ENCODE measurements at regions of chr16 and their contacts with region 1.

Region 1: GRCh38 chr16:30657866-30658730 is at the start of gene FBRS:
- DNase-seq: peak; percentile 100
- H3K4me3 ChIP-seq: peak within 1 kb of the TSS; percentile 70 to 93
- H3K4me3 Mint-ChIP-seq: peak within 1 kb of the TSS; percentile 92 to 99 (median 96)
- H3K27ac ChIP-seq: peak within 1 kb of the TSS; percentile 99
- H3K27ac Mint-ChIP-seq: peak within 1 kb of the TSS; percentile 98 to 100 (median 100)
- H3K4me1 ChIP-seq: peaks cover 43% of the 10 kb centered on the region
- H3K4me1 Mint-ChIP-seq: peaks cover 25 to 52% (median 39%) of the 10 kb centered on the region in 4 donors
- H3K27me3 ChIP-seq: no peaks in the 10 kb centered on the region
- H3K27me3 Mint-ChIP-seq: no peaks in the 10 kb centered on the region
- total RNA-seq, gene FBRS: 164 to 172 TPM

Region 2: GRCh38 chr16:30417529-30418349 is 240.4 kb before region 1 on chr16:
- CTCF ChIA-PET with region 1: no interaction called
- POLR2A ChIA-PET with region 1: interaction called, 11 read pairs
- intact Hi-C with region 1: no loop called
- DNase-seq: peak; percentile 89 to 93 (median 91)
- H3K4me3 ChIP-seq: peak overlapping the region; percentile 12 to 68
- H3K4me3 Mint-ChIP-seq: peak overlapping the region; percentile 39 to 85 (median 68)
- H3K27ac ChIP-seq: peak overlapping the region; percentile 61
- H3K27ac Mint-ChIP-seq: peak overlapping the region in 3 of 7 donors; percentile 41 to 90 (median 74)
- H3K4me1 ChIP-seq: peaks cover 15% of the 10 kb centered on the region
- H3K4me1 Mint-ChIP-seq: peaks cover 6 to 24% (median 13%) of the 10 kb centered on the region in 4 donors
- H3K27me3 ChIP-seq: no peaks in the 10 kb centered on the region
- H3K27me3 Mint-ChIP-seq: no peaks in the 10 kb centered on the region

Region 3: DNA sequence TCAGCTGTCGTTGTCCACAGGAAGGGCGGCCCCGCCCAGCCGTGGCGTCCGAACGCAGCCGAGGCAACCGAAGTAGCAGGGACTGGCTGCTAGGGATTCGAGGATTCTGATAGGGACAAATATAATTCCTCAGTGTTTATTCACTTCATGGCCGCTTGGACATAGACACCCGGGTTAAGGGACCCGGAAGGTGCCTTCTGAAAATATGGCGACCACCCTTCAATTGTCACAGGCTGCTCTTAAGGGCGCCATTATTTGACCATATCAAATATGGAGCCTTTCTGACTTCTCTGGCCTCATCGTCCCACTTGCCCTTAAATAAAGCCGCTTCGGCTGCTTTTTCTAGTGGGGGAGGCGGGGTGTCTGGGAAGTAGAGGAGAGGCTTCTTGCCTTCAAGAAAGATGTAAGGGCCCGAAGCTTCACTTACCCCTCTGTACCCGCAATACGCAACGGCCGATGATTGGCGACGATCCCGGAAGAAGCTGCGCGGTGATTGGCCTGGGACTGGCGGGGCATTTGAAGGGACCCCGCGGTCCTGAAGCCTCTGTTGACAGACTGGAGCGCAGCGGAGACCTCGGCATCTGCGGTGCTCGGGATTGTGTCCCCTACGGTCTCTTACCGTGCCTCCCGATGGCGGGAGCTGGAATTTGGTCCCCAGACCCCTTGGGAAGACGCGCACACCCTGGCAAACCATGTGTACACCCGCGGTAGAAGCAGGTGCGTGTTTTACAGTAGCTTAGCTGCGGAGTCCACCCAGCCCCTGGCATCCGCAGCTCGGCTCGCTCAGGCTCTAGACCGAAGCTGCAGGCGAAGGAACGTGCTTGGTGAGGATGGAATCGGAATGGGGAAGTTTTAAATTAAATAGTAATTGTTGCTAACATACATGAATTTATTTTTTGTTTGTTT is 86.2 kb before region 1 on chr16 and contains the start of gene ZNF688:
- CTCF ChIA-PET with region 1: interaction called, 3 read pairs
- POLR2A ChIA-PET with region 1: interaction called, 36 read pairs
- intact Hi-C with region 1: loop called (anchors 1 kb)
- DNase-seq: peak; percentile 94 to 100 (median 97)
- H3K4me3 ChIP-seq: peak within 1 kb of the TSS; percentile 65 to 71
- H3K4me3 Mint-ChIP-seq: peak within 1 kb of the TSS; percentile 86 to 96 (median 91)
- H3K27ac ChIP-seq: peak within 1 kb of the TSS; percentile 90
- H3K27ac Mint-ChIP-seq: peak within 1 kb of the TSS; percentile 96 to 97 (median 97)
- H3K4me1 ChIP-seq: peaks cover 50% of the 10 kb centered on the region
- H3K4me1 Mint-ChIP-seq: peaks cover 22 to 51% (median 36%) of the 10 kb centered on the region in 4 donors
- H3K27me3 ChIP-seq: no peaks in the 10 kb centered on the region
- H3K27me3 Mint-ChIP-seq: no peaks in the 10 kb centered on the region
- total RNA-seq, gene ZNF688: 21.4 to 22.7 TPM

Region 4: GRCh38 chr16:30622455-30623047 is 35.5 kb before region 1 on chr16:
- CTCF ChIA-PET with region 1: no interaction called
- POLR2A ChIA-PET with region 1: no interaction called
- intact Hi-C with region 1: no loop called
- DNase-seq: no peak
- H3K4me3 ChIP-seq: no peak overlapping the region
- H3K4me3 Mint-ChIP-seq: no peak overlapping the region
- H3K27ac ChIP-seq: no peak overlapping the region
- H3K27ac Mint-ChIP-seq: peak overlapping the region in 2 of 7 donors; percentile 46 to 53
- H3K4me1 ChIP-seq: no peaks in the 10 kb centered on the region
- H3K4me1 Mint-ChIP-seq: no peaks in the 10 kb centered on the region
- H3K27me3 ChIP-seq: no peaks in the 10 kb centered on the region
- H3K27me3 Mint-ChIP-seq: peaks cover under 1 to 5% of the 10 kb centered on the region in 2 donors

Region 5: DNA sequence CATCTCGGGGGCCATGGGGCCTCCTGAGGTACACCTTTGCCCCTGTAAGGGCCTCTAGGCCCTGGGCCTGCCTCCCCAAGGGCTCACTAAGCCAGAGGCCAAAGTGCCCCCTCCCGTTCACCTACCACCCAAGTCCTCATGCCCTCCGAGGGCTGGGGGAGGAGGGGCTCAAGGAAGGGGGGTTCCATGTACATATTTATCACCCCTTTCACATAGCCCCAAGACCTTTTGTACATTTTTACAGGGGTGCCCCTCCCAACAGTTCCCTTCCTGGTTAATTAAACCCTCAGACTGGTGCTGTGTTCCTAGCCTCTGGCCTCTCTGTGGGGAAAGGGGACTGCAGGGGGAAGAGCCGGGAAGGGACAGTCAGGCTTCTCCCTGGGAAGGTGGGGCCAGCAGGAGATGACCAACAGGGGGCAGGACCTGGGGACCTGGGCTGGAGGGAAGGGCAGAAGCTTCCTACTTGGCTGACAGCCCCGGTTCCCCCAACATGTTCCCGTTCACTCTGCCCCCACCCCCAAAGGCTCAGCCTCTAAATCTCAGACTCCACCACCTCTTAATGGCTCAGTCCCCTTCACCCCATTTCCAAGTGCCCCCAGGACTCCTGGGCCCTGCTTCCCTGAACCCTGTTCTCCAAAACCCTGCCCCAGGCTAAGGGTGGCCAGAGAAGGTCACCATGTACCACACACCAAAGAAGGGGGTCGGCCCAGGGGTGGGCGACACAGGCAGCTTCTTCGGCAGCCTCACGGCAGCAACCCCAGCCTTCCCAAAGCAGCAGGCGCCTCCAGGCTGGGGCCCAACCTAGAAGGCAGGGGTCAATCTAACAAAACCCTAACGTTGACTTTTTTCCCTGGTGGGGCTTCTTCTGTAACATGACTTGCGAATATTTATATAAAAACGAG is 12.0 kb after region 1 on chr16:
- CTCF ChIA-PET with region 1: no interaction called
- POLR2A ChIA-PET with region 1: interaction called, 15 read pairs
- intact Hi-C with region 1: no loop called
- DNase-seq: no peak
- H3K4me3 ChIP-seq: no peak overlapping the region
- H3K4me3 Mint-ChIP-seq: no peak overlapping the region
- H3K27ac ChIP-seq: no peak overlapping the region
- H3K27ac Mint-ChIP-seq: peak overlapping the region in 1 of 7 donors; percentile 58
- H3K4me1 ChIP-seq: no peaks in the 10 kb centered on the region
- H3K4me1 Mint-ChIP-seq: peaks cover 0 to 9% (median 3%) of the 10 kb centered on the region in 4 donors
- H3K27me3 ChIP-seq: no peaks in the 10 kb centered on the region
- H3K27me3 Mint-ChIP-seq: no peaks in the 10 kb centered on the region

Region 6: DNA sequence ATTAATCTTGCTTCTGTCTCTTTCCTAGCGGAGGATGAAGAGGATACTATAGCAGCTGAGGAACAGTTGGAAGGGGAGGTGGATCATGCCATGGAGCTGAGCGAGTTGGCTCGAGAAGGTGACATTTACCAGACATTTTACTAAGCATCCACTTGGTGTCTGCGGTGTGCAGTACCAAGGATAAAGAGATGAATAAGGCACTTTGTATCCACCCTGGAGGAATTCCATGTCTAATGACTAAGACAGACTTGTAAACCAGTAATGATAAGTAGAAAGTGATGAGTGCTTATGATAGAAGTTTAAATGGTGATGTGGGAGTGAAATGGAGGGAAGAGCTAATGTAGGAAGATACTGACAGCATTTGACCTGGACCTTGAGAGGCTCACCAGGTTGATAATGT is 52.9 kb after region 1 on chr16:
- CTCF ChIA-PET with region 1: no interaction called
- POLR2A ChIA-PET with region 1: no interaction called
- intact Hi-C with region 1: no loop called
- DNase-seq: no peak
- H3K4me3 ChIP-seq: no peak overlapping the region
- H3K4me3 Mint-ChIP-seq: no peak overlapping the region
- H3K27ac ChIP-seq: no peak overlapping the region
- H3K27ac Mint-ChIP-seq: peak overlapping the region in 4 of 7 donors; percentile 25 to 66 (median 55)
- H3K4me1 ChIP-seq: peaks cover 15% of the 10 kb centered on the region
- H3K4me1 Mint-ChIP-seq: peaks cover 15 to 27% (median 23%) of the 10 kb centered on the region in 4 donors
- H3K27me3 ChIP-seq: no peaks in the 10 kb centered on the region
- H3K27me3 Mint-ChIP-seq: no peaks in the 10 kb centered on the region

Region 7: DNA sequence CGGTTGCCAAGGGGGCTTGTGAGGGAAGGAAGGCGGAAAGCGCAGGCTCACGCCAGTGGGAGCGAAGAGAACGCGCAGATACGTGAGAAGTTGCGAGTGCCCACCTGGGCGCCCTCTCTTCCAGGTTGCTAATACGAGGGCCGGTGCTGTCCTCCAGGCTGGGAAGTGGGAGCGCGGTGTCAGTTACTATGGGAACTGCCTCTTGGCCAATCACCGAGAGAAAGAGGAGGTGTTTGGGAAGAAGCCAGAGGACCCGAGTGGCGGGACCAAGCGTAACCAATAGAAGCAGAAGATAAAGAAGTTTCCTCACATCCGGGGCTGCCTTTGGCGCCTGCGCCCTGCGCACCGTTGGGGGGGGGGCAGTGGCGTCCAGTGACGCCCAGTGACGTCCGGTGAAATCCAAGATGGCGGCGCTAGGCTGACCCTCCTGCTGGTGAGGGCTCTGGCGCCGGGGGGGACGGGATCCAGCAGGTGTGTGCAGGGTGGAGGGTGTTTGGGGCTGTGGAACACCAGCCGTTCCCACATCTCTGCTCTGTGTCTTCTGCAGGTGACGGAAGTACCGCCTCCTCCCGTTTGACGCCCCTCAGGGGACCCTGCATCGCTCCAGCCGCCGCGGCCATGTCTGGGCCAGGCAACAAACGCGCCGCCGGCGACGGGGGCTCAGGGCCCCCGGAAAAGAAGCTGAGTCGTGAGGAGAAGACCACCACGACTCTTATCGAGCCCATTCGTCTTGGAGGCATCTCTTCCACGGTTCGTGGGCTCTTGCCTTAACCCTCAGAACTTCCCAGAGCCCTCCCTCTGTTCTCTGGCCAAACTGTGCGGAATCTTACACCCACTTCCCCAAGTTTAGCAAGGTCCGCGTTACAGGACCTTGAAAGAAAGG is 104.1 kb after region 1 on chr16 and contains the starts of genes CFAP119 and RNF40:
- CTCF ChIA-PET with region 1: no interaction called
- POLR2A ChIA-PET with region 1: no interaction called
- intact Hi-C with region 1: loop called (anchors 1 kb)
- DNase-seq: peak; percentile 89 to 94 (median 91)
- H3K4me3 ChIP-seq: peak within 1 kb of the TSS; percentile 73 to 97
- H3K4me3 Mint-ChIP-seq: peak within 1 kb of the TSS; percentile 94 to 98 (median 97)
- H3K27ac ChIP-seq: peak within 1 kb of the TSS; percentile 71
- H3K27ac Mint-ChIP-seq: peak within 1 kb of the TSS; percentile 94 to 97 (median 96)
- H3K4me1 ChIP-seq: peaks cover 30% of the 10 kb centered on the region
- H3K4me1 Mint-ChIP-seq: peaks cover 11 to 38% (median 27%) of the 10 kb centered on the region in 4 donors
- H3K27me3 ChIP-seq: no peaks in the 10 kb centered on the region
- H3K27me3 Mint-ChIP-seq: no peaks in the 10 kb centered on the region
- total RNA-seq, gene CFAP119: 2.6 to 3.4 TPM
- total RNA-seq, gene RNF40: 101 to 109 TPM

Region 8: DNA sequence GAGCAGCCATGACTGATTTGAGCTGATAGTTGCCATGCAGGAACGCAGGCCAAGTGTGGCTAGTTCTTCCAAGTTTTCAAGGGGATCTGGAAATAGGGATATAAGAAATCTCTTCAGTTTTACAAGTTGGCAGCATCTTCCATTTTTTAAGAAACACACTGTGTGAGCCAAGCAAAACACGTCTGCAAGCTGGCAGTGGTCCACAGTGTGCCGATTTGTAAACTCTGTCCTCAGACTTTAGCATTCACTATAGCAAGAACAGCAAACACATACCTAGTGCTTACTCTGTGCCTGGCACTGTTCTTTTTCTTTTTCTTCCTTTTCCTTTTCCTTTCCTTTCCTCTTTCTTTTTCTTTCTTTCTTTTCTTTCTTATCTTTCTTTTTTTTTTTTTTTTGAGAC is 293.7 kb after region 1 on chr16:
- CTCF ChIA-PET with region 1: no interaction called
- POLR2A ChIA-PET with region 1: no interaction called
- intact Hi-C with region 1: no loop called
- DNase-seq: no peak
- H3K4me3 ChIP-seq: no peak overlapping the region
- H3K4me3 Mint-ChIP-seq: peak overlapping the region in 3 of 8 donors; percentile 8 to 38 (median 10)
- H3K27ac ChIP-seq: no peak overlapping the region
- H3K27ac Mint-ChIP-seq: no peak overlapping the region
- H3K4me1 ChIP-seq: peaks cover 26% of the 10 kb centered on the region
- H3K4me1 Mint-ChIP-seq: peaks cover 11 to 37% (median 20%) of the 10 kb centered on the region in 4 donors
- H3K27me3 ChIP-seq: no peaks in the 10 kb centered on the region
- H3K27me3 Mint-ChIP-seq: no peaks in the 10 kb centered on the region

Region 9: DNA sequence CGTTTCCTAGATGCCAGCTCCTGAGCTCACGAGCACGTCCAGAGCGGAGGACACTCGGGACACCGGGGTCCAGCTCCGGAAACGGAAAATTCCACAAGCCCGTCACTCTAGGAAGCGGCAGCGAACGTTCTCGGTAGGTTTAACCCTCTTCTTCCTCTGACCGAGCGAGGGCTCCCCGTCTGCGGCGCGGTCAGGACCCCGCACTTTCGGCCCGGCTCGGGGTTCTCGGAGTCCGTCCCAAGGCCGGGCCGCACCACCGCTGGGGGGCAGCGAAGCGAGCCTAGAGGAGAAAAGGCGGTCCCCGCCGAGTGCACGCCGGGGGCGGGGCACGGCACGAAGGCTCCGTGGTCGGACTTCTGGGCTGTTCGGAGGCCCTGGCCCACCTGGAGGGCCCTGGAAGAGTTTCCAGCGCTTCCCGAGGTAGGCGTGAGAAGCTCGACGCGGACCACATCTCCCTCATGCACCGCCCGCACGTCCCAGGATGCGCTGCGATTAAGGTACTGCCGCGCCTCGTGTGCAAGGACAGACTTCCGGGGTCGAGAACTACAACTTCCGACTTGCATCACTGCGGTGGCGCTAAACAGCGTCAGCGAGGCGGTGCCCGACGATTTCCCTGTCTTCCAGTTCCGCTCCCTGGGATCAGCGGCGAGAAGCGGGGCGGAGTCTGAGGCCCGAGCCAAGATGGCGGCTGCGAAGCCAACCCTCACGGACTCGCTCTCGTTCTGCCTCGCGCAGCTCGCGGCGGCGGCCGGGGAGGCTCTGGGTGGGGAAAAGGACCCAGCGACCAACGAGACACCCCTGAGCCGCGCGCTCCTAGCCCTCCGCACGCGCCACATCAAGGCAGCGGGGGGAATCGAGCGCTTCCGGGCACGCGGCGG is 801.0 kb after region 1 on chr16 and contains the start of gene ARMC5:
- CTCF ChIA-PET with region 1: no interaction called
- POLR2A ChIA-PET with region 1: interaction called, 3 read pairs
- intact Hi-C with region 1: loop called (anchors 2 kb)
- DNase-seq: peak; percentile 98 to 99 (median 99)
- H3K4me3 ChIP-seq: peak within 1 kb of the TSS; percentile 79 to 95
- H3K4me3 Mint-ChIP-seq: peak within 1 kb of the TSS; percentile 91 to 95 (median 94)
- H3K27ac ChIP-seq: peak within 1 kb of the TSS; percentile 99
- H3K27ac Mint-ChIP-seq: peak within 1 kb of the TSS; percentile 94 to 99 (median 98)
- H3K4me1 ChIP-seq: peaks cover 53% of the 10 kb centered on the region
- H3K4me1 Mint-ChIP-seq: peaks cover 25 to 60% (median 37%) of the 10 kb centered on the region in 4 donors
- H3K27me3 ChIP-seq: no peaks in the 10 kb centered on the region
- H3K27me3 Mint-ChIP-seq: no peaks in the 10 kb centered on the region
- total RNA-seq, gene ARMC5: 6.5 to 7.0 TPM